CD14-positive monocyte (primary cell): ENCODE measurements at regions of chr15 and their contacts with region 1.

Region 1: GRCh38 chr15:40906091-40906990 is 12.1 kb downstream of the VPS18 start:
- DNase-seq: peak; percentile 47 to 60 (median 49)
- H3K4me3 ChIP-seq: peak overlapping the region; percentile 47 to 76 (median 48)
- H3K4me3 Mint-ChIP-seq: peak overlapping the region; percentile 67 to 84
- H3K27ac ChIP-seq: peak overlapping the region; percentile 56 to 57
- H3K27ac Mint-ChIP-seq: peak overlapping the region in 5 of 7 donors; percentile 30 to 79 (median 61)
- H3K4me1 ChIP-seq: peaks cover 85 to 96% of the 10 kb centered on the region in 2 donors
- H3K4me1 Mint-ChIP-seq: peaks cover 91% of the 10 kb centered on the region
- H3K27me3 ChIP-seq: no peaks in the 10 kb centered on the region
- H3K27me3 Mint-ChIP-seq: peaks cover 0 to 7% (median 0%) of the 10 kb centered on the region in 3 donors
- CTCF ChIP-seq: peak; percentile 91

Region 2: GRCh38 chr15:40754883-40755811 is 151.2 kb before region 1 on chr15 and contains the start of gene RMDN3:
- intact Hi-C with region 1: loop called in 1 of 2 experiments (anchors 10 kb)
- DNase-seq: peak; percentile 91 to 92 (median 92)
- H3K4me3 ChIP-seq: peak within 1 kb of the TSS; percentile 55 to 99 (median 90)
- H3K4me3 Mint-ChIP-seq: peak within 1 kb of the TSS; percentile 91 to 93
- H3K27ac ChIP-seq: peak within 1 kb of the TSS; percentile 46 to 90
- H3K27ac Mint-ChIP-seq: peak within 1 kb of the TSS; percentile 78 to 95 (median 90)
- H3K4me1 ChIP-seq: peaks cover 14 to 18% of the 10 kb centered on the region in 2 donors
- H3K4me1 Mint-ChIP-seq: peaks cover 12% of the 10 kb centered on the region
- H3K27me3 ChIP-seq: no peaks in the 10 kb centered on the region
- H3K27me3 Mint-ChIP-seq: peaks cover 0 to 1% (median 0%) of the 10 kb centered on the region in 3 donors
- CTCF ChIP-seq: no peak
- polyA plus RNA-seq, gene RMDN3: 9.8 to 13.5 (median 13.2) TPM

Region 3: DNA sequence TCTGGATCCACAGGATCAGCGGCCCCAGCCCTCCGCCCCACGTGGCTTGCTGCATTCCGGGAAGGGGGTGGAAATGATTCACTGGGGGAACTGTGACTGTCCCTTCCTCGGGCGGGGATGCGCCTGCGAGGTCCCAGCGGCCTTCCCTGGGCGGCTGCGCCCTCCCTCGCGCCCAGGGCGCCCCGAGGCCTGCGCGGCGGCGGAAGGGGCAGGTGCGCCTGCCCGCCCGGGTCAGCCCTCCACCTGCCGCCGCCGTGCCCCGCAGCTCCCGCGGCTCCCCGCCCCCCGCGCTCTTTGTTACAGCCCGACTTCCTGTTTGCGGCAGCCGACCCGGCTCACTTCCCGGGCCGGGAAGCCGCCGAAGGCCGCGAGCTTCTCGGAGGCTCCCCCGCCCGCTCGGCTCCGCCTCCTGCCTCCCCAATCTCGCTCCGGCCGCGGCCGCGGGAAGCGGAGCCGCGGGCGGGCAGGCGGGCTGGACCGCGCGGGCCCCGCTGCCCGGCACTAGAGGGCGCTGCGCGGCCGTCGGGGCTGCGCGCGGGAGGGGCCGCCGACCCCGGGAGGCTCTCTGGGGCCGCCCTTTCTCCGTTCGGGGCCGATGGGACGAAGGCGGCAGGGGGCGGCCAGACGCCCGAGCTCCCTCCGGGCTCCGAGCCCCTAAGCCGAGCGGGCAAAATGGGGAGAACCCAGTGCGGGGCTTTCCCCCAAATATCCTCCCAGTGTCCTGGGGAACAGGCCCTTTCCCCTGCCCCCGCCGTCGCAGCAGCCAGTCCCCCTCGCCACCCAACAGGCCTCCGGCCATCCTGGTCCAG is 35.4 kb after region 1 on chr15:
- intact Hi-C with region 1: loop called in 1 of 2 experiments (anchors 5 kb)
- DNase-seq: peak; percentile 73 to 81 (median 76)
- H3K4me3 ChIP-seq: peak overlapping the region; percentile 57 to 80 (median 76)
- H3K4me3 Mint-ChIP-seq: peak overlapping the region; percentile 77 to 88
- H3K27ac ChIP-seq: peak overlapping the region; percentile 64 to 75
- H3K27ac Mint-ChIP-seq: peak overlapping the region in 6 of 7 donors; percentile 37 to 86 (median 54)
- H3K4me1 ChIP-seq: peaks cover 34 to 40% of the 10 kb centered on the region in 2 donors
- H3K4me1 Mint-ChIP-seq: peaks cover 35% of the 10 kb centered on the region
- H3K27me3 ChIP-seq: no peaks in the 10 kb centered on the region
- H3K27me3 Mint-ChIP-seq: peaks cover 9 to 16% (median 12%) of the 10 kb centered on the region in 3 donors
- CTCF ChIP-seq: peak; percentile 76

Region 4: GRCh38 chr15:40952301-40952900 is 46.1 kb after region 1 on chr15:
- intact Hi-C with region 1: no loop called
- DNase-seq: no peak
- H3K4me3 ChIP-seq: peak overlapping the region; percentile 31 to 81 (median 79)
- H3K4me3 Mint-ChIP-seq: peak overlapping the region; percentile 86 to 93
- H3K27ac ChIP-seq: peak overlapping the region; percentile 19 to 58
- H3K27ac Mint-ChIP-seq: peak overlapping the region in 2 of 7 donors; percentile 50 to 75
- H3K4me1 ChIP-seq: peaks cover 16 to 19% of the 10 kb centered on the region in 2 donors
- H3K4me1 Mint-ChIP-seq: peaks cover 22% of the 10 kb centered on the region
- H3K27me3 ChIP-seq: peaks cover 0 to 9% of the 10 kb centered on the region in 2 donors
- H3K27me3 Mint-ChIP-seq: peaks cover 15 to 22% (median 21%) of the 10 kb centered on the region in 3 donors
- CTCF ChIP-seq: no peak

Region 5: DNA sequence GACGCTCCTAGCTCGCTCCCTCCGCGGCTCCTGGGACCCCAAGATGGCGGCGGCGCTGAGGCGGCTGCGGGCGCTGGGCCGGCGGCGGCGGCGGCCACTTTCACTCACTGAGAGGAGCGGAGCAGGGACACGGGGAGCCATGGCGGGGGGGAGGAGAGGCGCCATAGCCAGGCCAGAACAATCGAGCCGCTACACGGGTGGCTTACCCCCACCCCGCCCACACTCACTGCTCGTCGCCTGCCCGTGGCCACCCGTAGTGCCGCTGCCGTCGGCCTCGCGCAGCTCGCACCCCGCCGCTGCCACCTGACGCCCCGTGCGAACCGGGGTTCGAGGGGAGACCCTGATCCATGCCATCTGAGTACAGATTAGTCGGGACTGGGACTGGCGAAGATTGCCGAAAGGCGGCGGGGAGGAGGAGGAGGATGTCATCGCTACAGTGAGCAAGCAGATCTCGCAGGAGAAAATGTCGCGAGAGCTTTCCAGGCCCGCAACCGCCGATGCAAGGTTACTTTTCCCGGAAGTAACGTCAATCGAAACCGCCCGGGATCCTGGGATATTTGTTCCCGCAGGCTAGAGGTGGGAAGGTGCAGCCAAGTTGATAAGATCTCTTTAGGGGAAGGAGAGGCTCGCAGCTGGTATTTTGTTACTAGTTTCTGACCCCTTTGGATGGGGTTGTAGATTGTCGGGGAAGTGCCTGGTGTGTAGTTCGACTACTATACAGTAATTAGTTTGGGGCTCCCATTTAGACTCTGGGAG is 210.0 kb after region 1 on chr15 and contains the start of gene INO80:
- intact Hi-C with region 1: loop called in 1 of 2 experiments (anchors 5 kb)
- DNase-seq: peak; percentile 95 to 99 (median 97)
- H3K4me3 ChIP-seq: peak within 1 kb of the TSS; percentile 58 to 96 (median 96)
- H3K4me3 Mint-ChIP-seq: peak within 1 kb of the TSS; percentile 92 to 99
- H3K27ac ChIP-seq: peak within 1 kb of the TSS; percentile 87 to 96
- H3K27ac Mint-ChIP-seq: peak within 1 kb of the TSS; percentile 98 to 100 (median 99)
- H3K4me1 ChIP-seq: peaks cover 14 to 19% of the 10 kb centered on the region in 2 donors
- H3K4me1 Mint-ChIP-seq: peaks cover 23% of the 10 kb centered on the region
- H3K27me3 ChIP-seq: peaks cover 0 to 2% of the 10 kb centered on the region in 2 donors
- H3K27me3 Mint-ChIP-seq: peaks cover 0 to 3% (median 3%) of the 10 kb centered on the region in 3 donors
- CTCF ChIP-seq: no peak
- polyA plus RNA-seq, gene INO80: 2.3 to 13.1 (median 2.4) TPM

Region 6: GRCh38 chr15:41331833-41332787 is 425.8 kb after region 1 on chr15 and contains the start of gene OIP5:
- intact Hi-C with region 1: loop called in 1 of 2 experiments (anchors 5 kb)
- DNase-seq: peak; percentile 99 to 100 (median 99)
- H3K4me3 ChIP-seq: peak within 1 kb of the TSS; percentile 81 to 94 (median 81)
- H3K4me3 Mint-ChIP-seq: peak within 1 kb of the TSS; percentile 98 to 100
- H3K27ac ChIP-seq: peak within 1 kb of the TSS; percentile 59 to 79
- H3K27ac Mint-ChIP-seq: peak within 1 kb of the TSS; percentile 90 to 98 (median 95)
- H3K4me1 ChIP-seq: peaks cover 17 to 29% of the 10 kb centered on the region in 2 donors
- H3K4me1 Mint-ChIP-seq: peaks cover 32% of the 10 kb centered on the region
- H3K27me3 ChIP-seq: no peaks in the 10 kb centered on the region
- H3K27me3 Mint-ChIP-seq: peaks cover 0 to under 1% (median 0%) of the 10 kb centered on the region in 3 donors
- CTCF ChIP-seq: peak; percentile 79
- polyA plus RNA-seq, gene OIP5: 0.05 to 0.28 (median 0.22) TPM